Cardiac septum (tissue), 1 donor: ENCODE measurements at regions of chr5 and their contacts with region 1.

Region 1: GRCh38 chr5:68962757-68963484 is 130.9 kb upstream of the SLC30A5 start:
- DNase-seq: no peak

Region 2: DNA sequence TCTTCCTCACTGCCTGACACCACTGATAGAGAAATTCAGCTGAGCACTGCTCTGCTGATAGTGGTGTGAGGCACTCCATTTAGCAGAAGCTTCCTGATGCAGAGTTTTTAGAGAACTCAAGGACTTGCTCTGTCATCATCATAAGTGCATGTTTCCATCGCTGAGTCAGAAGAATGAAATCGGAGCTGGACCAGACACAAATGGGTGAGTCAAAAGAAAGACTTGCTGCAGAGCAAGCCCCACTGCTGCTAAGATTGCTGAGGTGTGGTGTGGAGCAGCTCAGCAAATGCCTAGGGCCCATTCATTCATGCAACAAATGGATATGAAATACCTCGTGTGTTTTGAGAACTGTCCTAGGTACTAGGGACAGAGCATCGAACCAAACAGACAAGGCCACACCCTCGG is 279.3 kb before region 1 on chr5:
- intact Hi-C with region 1: loop called (anchors 10 kb)
- DNase-seq: no peak

Region 3: GRCh38 chr5:68793074-68793473 is 169.8 kb before region 1 on chr5:
- intact Hi-C with region 1: loop called (anchors 5 kb)
- DNase-seq: no peak

Region 4: DNA sequence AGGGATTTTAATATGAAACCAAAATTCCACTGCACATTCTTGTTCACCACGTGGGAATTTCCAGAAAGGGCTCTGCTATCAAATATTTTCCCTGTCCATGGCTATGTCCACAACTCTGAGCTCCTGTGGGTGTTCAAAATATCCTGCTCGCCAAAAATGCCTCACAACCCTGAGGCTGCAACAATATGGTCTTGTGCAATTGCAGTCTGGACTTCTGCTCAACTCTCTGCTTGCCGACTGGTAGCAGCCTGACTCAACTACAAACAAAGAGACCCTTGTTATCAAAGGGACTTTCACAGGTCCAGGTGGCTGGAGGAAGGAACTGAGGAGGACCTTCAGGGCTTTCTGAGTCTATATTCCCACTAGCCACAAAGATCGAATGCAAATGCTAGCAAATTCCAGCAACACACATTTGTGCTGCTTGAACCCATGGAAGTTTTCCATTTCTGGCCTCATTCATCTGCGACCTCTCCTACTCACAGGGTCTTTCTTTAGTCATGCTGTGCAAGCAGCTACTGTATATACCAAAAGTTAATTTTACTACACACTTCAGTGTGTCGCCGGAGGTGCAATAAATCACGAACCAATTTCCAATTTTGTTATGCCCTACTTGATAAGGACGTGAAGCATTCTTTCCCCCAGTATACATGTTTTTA is 38.3 kb before region 1 on chr5:
- intact Hi-C with region 1: no loop called
- DNase-seq: no peak